ENCODE measurements at regions of chr5 and their contacts with region 1.

Region 1: DNA sequence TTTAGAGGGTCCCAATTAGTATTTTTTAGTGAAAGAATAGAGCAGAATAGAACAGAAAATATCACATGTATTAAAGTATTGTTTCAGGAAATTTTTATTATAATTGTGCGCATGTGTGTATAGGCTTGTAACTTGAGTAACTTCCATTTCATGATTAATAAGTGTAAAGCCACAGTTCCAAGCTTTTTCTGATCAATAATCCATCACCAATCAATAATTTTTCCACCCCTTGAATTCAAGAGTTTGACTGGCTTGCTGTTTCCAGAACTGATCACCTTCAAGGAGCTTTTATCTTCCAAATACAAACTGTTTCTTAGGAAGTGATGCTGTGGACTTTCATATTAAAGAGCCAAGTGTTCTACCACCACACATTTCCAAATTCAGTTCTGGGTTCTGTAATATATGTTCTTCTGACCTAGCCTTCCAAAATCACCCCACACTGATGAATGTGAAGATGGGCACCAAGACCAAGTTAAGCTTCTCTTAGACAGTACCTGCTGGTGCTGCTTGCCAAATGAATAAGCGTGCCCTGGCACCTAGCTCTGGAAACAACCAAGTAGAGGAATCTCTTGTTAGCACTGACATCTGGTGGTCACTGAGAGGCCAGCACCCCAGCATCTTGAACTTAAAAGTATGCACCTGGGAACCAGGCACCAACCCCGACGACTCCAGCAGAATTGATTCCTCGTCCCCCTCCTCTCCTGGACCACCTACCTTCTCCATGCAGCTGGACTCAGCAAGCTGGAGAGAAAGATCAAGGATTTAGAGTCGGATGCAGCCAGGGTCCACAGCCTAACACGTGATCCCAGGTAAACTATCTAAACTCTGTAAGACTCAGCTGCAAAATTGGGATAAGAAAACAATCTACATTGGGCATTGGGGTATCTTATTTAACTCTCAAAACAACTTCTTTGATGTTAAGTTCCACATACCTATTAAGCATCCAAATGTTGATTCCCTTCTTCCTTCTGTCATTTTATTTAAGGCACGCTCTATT is 89.6 kb downstream of the SLC1A3 start:
- DNase-seq: peak; percentile 56
- ATAC-seq: peak; percentile 81
- H3K4me3 ChIP-seq: no peak overlapping the region
- H3K27ac ChIP-seq: no peak overlapping the region
- H3K4me1 ChIP-seq: peaks cover 4% of the 10 kb centered on the region; the same call in 1 of the 2 replicates
- H3K27me3 ChIP-seq: peaks cover 8% of the 10 kb centered on the region
- CTCF ChIP-seq: peak; percentile 87

Region 2: DNA sequence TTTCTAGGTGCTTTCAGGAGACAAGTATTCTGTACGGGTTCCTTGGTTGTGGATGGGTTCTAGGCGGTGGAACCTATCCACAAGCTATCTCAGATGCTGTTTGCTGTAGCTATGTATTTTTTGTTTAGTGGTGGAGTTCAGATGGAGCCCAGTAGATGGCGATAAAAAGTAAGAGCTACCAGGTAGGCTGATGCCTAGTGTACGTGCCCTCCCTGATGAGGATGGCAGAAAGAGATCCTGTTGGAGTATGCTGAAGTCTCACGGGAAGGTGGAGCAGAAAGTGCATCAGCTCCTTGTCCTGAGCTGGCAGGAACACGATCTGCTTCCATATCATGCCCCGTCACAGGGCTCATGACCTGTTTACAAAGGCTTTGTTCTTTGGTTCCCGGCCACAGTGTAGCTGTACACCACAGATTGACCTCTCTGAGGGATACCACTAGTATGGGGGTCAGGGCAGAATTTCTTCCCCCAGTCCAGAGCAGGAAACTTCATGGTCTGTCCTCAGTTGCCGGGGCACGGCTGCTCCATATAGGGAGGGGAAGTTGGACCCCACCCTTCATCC is 616.7 kb before region 1 on chr5:
- CTCF ChIA-PET with region 1: interaction called, 10 read pairs
- POLR2A ChIA-PET with region 1: no interaction called
- in situ Hi-C with region 1: no loop called
- intact Hi-C with region 1: no loop called
- DNase-seq: peak; percentile 53
- ATAC-seq: peak; percentile 98
- H3K4me3 ChIP-seq: peak overlapping the region in 1 of 2 experiments; percentile 1; a peak in 1 of 4 replicates
- H3K27ac ChIP-seq: no peak overlapping the region
- H3K4me1 ChIP-seq: no peaks in the 10 kb centered on the region
- H3K27me3 ChIP-seq: no peaks in the 10 kb centered on the region
- CTCF ChIP-seq: peak; percentile 85

Region 3: DNA sequence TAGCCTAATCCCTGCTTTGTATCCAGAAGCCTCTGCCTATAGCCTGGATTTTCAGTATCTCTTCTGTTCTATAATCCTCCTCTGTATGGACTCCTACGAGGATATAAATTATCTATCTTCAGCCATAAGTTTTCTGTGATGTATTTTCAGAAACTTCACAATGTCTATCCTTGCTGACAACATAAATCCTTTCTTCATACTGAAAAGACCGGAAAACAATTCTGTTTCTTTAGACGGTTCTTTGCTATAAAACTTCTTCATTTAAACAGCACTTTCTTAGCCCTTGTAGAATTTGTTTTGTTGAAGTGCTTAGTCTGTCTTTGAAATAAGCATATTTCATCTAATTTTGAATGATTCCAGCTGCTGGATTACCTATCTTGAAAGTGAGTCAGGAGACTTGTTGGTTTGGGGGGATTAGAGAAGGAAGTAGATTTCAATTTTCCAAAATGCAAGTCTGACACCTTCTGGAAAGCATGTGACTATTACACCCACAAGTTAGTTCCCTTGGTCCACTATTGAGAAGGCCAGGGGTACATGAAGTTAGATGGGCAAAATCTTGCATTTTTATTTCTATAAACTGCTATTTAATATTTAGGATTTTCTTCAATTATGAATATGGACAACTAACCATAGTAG is 298.0 kb before region 1 on chr5:
- CTCF ChIA-PET with region 1: no interaction called
- POLR2A ChIA-PET with region 1: no interaction called
- in situ Hi-C with region 1: no loop called
- intact Hi-C with region 1: no loop called
- DNase-seq: no peak
- ATAC-seq: no peak
- H3K4me3 ChIP-seq: no peak overlapping the region
- H3K27ac ChIP-seq: no peak overlapping the region
- H3K4me1 ChIP-seq: no peaks in the 10 kb centered on the region
- H3K27me3 ChIP-seq: no peaks in the 10 kb centered on the region; the same call in 1 of the 2 replicates
- CTCF ChIP-seq: peak; percentile 29; the same call in 1 of the 2 replicates

Region 4: DNA sequence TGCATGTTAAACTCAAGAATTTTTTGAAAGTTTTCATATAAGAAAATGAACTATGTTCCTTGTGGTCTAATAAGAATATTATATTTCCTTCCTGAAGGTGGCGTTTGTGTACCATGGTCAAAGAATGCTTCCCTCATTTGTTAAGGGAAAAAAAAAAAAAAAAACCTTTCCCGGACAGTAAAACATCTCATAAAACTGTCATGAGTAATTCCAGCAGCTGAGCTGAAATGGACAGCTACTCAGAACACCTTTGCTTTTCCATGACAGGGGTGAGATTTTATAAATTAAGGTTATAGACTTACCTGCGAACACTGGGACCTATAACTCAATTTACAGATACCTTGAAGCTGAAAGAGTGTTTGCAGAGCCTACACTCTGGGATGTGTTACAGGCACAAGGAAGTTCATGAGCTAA is 281.1 kb before region 1 on chr5:
- CTCF ChIA-PET with region 1: interaction called, 13 read pairs
- POLR2A ChIA-PET with region 1: no interaction called
- in situ Hi-C with region 1: no loop called
- intact Hi-C with region 1: loop called (anchors 1 kb)
- DNase-seq: no peak
- ATAC-seq: 0 out of 2 replicates have a peak, but pooled peaks have one; percentile 58
- H3K4me3 ChIP-seq: no peak overlapping the region
- H3K27ac ChIP-seq: no peak overlapping the region
- H3K4me1 ChIP-seq: no peaks in the 10 kb centered on the region
- H3K27me3 ChIP-seq: peaks cover 2% of the 10 kb centered on the region; the same call in 1 of the 2 replicates
- CTCF ChIP-seq: peak; percentile 55; the same call in 1 of the 2 replicates

Measured in Panc1 (cell line).